Lower leg skin (tissue), 4 donors: ENCODE measurements at regions of chr5 and their contacts with region 1.

Region 1: GRCh38 chr5:158174918-158175851 is 316.2 kb upstream of the CLINT1 start:
- DNase-seq: peak; percentile 70 to 89
- H3K4me3 ChIP-seq: no peak overlapping the region
- CTCF ChIP-seq: peak in 1 of 3 donors; percentile 58
- POLR2A ChIP-seq: no peak

Region 2: GRCh38 chr5:158695595-158696330 is 520.6 kb after region 1 on chr5:
- intact Hi-C with region 1: loop called (anchors 10 kb)
- DNase-seq: peak; percentile 71 to 94
- H3K4me3 ChIP-seq: no peak overlapping the region
- CTCF ChIP-seq: peak in 1 of 3 donors; percentile 84
- POLR2A ChIP-seq: no peak

Region 3: GRCh38 chr5:159106569-159107282 is 931.5 kb after region 1 on chr5:
- intact Hi-C with region 1: loop called (anchors 5 kb)
- DNase-seq: peak; percentile 59 to 95
- H3K4me3 ChIP-seq: no peak overlapping the region
- CTCF ChIP-seq: peak in 1 of 3 donors; percentile 55
- POLR2A ChIP-seq: no peak

Region 4: DNA sequence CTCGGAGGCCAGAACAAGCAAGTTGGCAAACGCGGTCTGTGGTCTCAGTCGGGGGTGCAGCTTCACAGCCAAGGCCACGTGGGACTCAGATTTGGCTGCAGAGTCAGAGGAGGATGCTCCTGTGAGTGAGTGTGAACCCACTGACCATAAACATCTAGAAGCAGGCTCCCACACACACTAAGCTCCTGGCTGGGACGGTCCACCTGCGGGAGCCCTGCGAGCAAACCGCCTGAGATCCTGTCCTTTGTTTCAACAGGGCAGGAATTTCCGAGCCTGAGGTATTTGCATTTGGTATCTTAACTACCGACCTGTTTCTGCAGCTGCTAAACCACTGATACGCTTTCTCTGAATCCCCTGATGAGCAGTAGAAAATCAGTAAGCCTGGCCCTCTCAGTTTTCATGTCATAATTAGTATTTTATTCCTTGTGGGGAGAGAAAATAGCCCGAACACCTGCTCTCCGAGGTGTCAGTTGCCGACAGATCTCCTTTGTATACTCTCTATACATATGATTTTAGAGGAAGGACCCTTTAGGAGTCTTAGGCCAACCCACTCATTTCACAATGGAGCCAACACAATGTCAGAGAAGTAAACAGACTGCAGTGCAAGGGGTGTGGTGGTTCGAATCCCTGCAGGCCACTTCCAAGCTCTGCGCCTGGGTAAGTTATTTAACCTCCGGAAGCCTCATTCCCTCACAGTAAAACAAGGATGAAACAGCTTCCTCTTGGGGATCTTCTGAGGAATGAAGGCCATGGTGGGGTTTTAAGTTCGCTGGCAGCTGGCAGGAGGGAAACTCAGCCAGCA is 1985.0 kb after region 1 on chr5:
- intact Hi-C with region 1: loop called (anchors 5 kb)
- DNase-seq: no peak
- H3K4me3 ChIP-seq: no peak overlapping the region
- CTCF ChIP-seq: no peak
- POLR2A ChIP-seq: no peak